SK-N-SH (cell line): ENCODE measurements at regions of chr14 and their contacts with region 1.

Region 1: DNA sequence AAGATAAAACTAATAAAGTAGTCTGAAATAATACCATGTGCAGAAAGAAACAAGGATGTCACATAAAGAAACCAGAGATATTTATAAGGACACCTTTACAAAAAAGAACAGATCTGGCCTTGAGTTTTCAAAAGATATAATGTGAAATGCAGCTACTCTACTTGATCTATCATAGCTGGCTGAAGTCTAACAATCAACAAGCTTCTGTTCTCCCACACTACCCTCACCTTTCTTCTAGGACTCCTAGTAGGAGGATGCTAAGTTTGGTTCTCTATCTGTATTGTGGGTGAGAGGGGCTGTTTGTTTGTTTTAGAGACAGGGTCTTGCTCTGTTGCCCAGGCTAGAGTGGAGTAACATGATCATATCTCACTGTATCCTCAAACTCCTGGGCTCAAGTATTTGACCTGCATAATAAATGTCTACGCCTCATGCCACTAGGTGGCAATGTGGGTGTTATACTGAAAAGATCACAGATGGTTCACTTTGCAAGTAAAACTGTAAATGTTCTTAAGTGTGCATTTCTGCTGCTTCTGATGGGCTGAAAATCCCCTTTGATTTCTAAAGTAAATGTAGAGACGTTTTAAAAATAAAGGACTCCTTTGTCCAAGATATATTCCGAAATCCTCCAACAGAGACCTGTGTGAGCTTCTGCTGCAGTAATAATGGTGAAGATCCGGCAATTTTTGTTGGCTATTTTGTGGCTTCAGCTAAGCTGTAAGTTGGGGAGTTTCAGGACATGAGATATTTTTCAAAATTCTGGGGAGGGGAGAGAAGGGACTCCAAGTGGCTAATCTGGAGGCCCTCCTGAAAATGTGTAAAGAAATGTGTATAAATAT is 269.3 kb downstream of the DAD1 start:
- DNase-seq: peak; percentile 30
- H3K4me3 ChIP-seq: peak overlapping the region in 1 of 2 experiments; percentile 23; a peak in 1 of 4 replicates
- H3K27ac ChIP-seq: no peak overlapping the region
- H3K4me1 ChIP-seq: no peaks in the 10 kb centered on the region
- H3K27me3 ChIP-seq: peaks cover 12% of the 10 kb centered on the region; the same call in 1 of the 2 replicates
- CTCF ChIP-seq: peak; percentile 76
- EP300 ChIP-seq: no peak
- RAD21 ChIP-seq: peak; percentile 38

Region 2: DNA sequence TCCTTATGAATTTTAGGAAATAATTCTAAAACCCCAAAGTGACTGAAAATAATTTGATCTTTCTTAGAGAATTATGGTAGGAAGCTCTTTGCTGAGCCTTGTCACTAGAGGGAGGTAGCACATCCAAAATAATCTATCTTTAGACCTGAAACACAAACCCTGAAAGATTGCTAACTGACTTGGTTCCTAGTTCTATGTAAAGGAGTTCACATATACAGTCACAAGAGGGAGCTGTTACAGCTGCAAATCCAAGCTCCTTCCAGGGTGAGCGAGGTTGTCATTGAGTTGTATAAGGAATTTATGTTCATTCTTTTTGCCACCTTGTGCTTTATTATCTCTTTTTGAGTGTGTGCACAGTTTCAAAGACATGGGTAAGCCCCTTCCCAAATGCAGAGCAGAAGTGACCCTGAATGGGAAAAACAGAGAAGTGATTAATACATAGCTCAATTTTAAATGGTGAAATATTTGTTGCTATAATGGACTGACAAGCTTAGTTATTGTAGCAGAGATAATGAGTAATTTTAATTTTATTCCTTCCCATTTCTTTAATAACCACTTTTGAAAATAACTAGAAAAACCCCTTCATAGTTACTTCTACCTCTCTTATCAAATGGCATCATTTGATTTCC is 118.7 kb before region 1 on chr14:
- CTCF ChIA-PET with region 1: no interaction called
- POLR2A ChIA-PET with region 1: no interaction called
- DNase-seq: no peak
- H3K4me3 ChIP-seq: no peak overlapping the region; a peak in 1 of 4 replicates
- H3K27ac ChIP-seq: no peak overlapping the region
- H3K4me1 ChIP-seq: no peaks in the 10 kb centered on the region
- H3K27me3 ChIP-seq: no peaks in the 10 kb centered on the region
- CTCF ChIP-seq: peak; percentile 74
- EP300 ChIP-seq: no peak
- RAD21 ChIP-seq: no peak

Region 3: DNA sequence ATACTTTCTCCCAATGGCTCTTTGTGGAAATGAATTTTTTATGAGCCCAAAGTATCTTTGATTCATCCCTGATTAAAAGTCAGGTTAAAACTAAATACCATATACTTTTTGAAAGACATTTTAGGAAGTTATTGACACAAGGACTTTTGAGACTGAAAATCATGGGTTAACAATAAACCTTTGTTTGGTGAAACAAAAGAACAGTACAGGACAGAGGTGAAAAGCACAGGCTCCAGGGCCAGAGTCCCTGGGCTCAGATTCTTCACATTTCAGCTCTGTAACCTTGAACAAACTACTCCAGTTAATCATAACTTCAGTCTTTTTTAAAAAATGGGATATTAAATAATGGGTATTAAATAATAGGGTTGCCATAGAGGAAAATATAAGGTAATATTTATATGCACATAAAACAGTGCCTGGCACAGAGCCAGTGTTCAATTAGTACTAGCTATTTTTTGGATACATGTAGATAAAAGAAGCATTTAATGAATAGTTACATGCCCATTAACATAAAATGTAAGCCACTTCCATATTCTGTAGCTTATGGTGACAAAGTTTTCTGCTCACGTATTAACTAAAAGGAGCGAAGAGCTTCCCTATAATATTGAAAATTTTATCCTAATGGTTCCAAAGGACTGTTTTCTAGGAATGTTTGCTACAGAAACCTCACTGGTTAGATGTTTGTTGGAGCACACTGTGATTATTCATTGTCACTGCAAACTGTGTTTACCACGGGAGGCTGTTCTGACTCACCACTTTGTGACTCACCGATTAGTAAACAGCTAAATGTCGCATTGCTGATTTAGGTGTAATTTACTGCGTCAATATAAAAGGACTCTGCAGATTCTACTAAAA is 13.9 kb after region 1 on chr14:
- CTCF ChIA-PET with region 1: interaction called, 11 read pairs
- POLR2A ChIA-PET with region 1: no interaction called
- DNase-seq: no peak
- H3K4me3 ChIP-seq: no peak overlapping the region
- H3K27ac ChIP-seq: no peak overlapping the region
- H3K4me1 ChIP-seq: no peaks in the 10 kb centered on the region
- H3K27me3 ChIP-seq: peaks cover 7% of the 10 kb centered on the region; the same call in 1 of the 2 replicates
- CTCF ChIP-seq: no peak
- EP300 ChIP-seq: no peak
- RAD21 ChIP-seq: no peak

Region 4: DNA sequence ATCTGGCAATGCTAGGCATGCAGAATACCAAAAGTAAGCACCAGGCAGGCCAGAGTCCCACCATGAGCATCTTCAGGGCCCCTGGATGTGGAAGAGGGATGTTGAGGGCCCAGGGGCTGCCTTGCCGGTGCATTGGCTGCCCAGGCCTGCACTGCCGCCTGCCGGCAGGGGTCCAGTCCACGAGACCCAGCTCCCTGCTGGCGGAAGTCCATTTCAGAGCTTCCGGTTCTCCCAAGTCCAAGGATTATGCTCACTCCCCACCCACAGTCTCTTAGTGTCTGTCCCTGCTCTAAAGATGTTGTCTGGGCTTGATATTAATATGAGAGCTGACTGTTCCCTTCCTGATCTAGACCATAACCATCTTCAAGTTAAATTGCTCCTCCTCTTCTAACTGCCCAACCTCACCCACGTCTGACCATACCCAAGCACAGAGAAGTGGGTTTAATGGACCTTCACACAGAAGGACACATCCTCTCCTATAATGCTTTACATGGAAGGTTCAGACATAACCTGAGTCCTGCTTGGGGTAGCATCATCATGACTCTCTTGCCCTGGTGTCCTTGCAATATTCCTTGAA is 151.9 kb after region 1 on chr14:
- CTCF ChIA-PET with region 1: no interaction called
- POLR2A ChIA-PET with region 1: no interaction called
- DNase-seq: peak; percentile 48
- H3K4me3 ChIP-seq: no peak overlapping the region; a peak in 1 of 4 replicates
- H3K27ac ChIP-seq: no peak overlapping the region
- H3K4me1 ChIP-seq: peaks cover 0 to 20% of the 10 kb centered on the region in 2 experiments; a peak in 1 of 4 replicates
- H3K27me3 ChIP-seq: peaks cover 11% of the 10 kb centered on the region; the same call in 1 of the 2 replicates
- CTCF ChIP-seq: peak; percentile 22; the same call in 1 of the 2 replicates
- EP300 ChIP-seq: no peak
- RAD21 ChIP-seq: no peak; the same call in 1 of the 2 replicates

Region 5: DNA sequence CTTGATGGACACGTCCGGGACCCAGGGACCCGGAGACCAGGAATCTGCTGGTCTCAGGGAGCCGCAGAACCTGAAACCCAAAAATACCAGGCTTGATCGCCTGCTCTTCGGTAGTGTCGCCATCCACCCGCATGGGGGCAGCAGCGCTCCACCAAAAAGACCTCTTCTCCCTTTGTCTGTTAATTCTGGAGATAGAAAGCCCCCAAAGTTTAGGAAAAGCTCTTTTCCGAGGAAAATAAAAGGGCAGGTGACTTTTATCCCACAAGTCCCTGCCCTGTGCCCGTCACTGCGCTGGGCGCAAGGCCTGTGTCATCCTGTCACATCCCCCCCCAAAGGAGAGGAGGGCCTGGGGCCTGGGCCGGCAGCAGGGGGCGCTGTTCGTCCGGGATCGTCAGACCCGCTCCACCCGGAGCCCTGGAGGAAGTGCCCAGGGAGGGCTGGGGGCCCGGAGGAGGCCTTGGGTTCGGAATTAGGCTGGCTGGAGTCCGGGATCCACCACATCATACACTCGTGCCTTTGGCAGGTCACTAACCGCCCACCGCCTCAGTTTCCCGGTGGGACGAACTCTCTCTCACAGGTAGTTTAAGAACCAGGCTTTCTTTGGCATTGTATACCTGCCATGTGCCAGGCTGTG is 237.4 kb after region 1 on chr14:
- CTCF ChIA-PET with region 1: no interaction called
- POLR2A ChIA-PET with region 1: no interaction called
- DNase-seq: peak; percentile 94
- H3K4me3 ChIP-seq: peak overlapping the region; percentile 35 to 67
- H3K27ac ChIP-seq: no peak overlapping the region; a peak in 1 of 4 replicates
- H3K4me1 ChIP-seq: peaks cover 3 to 10% of the 10 kb centered on the region in 2 experiments; a peak in 3 of 4 replicates
- H3K27me3 ChIP-seq: no peaks in the 10 kb centered on the region
- CTCF ChIP-seq: peak; percentile 100
- EP300 ChIP-seq: no peak
- RAD21 ChIP-seq: peak; percentile 80

Region 6: GRCh38 chr14:22748631-22749068 is 428.9 kb after region 1 on chr14:
- CTCF ChIA-PET with region 1: no interaction called
- POLR2A ChIA-PET with region 1: no interaction called
- DNase-seq: no peak
- H3K4me3 ChIP-seq: no peak overlapping the region
- H3K27ac ChIP-seq: no peak overlapping the region
- H3K4me1 ChIP-seq: no peaks in the 10 kb centered on the region
- H3K27me3 ChIP-seq: peaks cover 11% of the 10 kb centered on the region
- CTCF ChIP-seq: no peak
- EP300 ChIP-seq: no peak
- RAD21 ChIP-seq: no peak